AG04449 (cell line): ENCODE measurements at regions of chr6 and their contacts with region 1.

Region 1: DNA sequence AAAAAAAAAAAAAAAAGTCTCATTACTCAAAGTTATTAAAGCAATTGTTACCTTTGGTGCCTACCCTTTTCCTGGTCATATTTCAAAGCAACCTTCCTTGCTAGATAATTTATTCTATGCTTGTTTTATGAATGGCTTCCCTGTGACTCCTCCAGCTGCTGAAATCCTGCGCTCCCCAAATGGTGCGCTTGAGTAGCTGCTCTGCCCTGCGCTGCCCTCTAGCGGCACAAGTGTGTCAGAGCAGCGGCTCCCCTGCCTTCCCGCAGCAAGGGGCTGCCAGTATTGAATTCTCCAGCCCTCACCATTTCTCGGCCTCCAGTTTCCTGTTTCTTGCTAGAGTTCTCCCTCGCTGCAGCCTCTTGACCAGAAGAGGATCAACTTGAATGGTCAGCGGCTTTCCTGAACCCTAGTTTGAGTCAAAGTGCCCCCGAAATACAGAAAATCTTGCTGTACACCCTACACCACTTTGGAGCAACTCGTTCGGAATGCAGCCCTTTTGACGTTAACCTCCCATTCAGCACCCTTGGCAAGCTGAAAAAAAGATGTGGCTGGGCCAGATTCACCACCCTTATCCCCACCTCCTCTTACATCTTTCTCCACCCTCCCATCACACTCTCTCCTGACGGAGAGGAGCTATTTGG is 60.4 kb upstream of the KLHL31 start:
- DNase-seq: no peak
- H3K4me3 ChIP-seq: no peak overlapping the region
- CTCF ChIP-seq: peak; percentile 98

Region 2: DNA sequence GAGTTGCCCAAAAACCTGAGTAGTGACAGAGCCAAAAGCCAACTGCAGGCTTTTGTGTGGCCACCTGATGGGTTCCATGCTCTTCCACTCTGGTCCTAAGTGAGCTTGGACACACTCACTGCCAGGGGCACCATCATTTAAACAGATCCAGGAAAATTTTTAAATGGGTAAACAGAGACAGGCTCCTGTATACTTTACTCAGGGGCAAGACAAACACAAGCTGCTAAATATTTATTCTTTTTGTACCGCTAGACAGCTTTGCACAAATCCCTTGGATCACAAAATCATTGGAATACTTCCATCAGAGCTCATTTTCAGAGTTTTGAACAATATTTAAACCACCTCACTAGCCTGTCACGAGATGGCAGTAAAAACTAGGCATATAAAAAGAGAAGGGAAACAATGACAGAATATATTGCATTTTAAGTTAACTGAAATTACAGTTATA is 212.4 kb before region 1 on chr6:
- CTCF ChIA-PET with region 1: interaction called, 11 read pairs
- POLR2A ChIA-PET with region 1: no interaction called
- DNase-seq: no peak
- H3K4me3 ChIP-seq: no peak overlapping the region
- CTCF ChIP-seq: no peak

Region 3: GRCh38 chr6:53686355-53686940 is 39.5 kb before region 1 on chr6:
- CTCF ChIA-PET with region 1: interaction called, 14 read pairs
- POLR2A ChIA-PET with region 1: no interaction called
- DNase-seq: no peak
- H3K4me3 ChIP-seq: no peak overlapping the region
- CTCF ChIP-seq: no peak

Region 4: GRCh38 chr6:53741034-53741823 is 15.3 kb after region 1 on chr6:
- CTCF ChIA-PET with region 1: interaction called, 96 read pairs
- POLR2A ChIA-PET with region 1: no interaction called
- DNase-seq: no peak
- H3K4me3 ChIP-seq: no peak overlapping the region
- CTCF ChIP-seq: no peak

Region 5: GRCh38 chr6:53794720-53795253 is 68.9 kb after region 1 on chr6 and contains the start of gene LRRC1:
- CTCF ChIA-PET with region 1: interaction called, 21 read pairs
- POLR2A ChIA-PET with region 1: interaction called, 3 read pairs
- DNase-seq: no peak
- H3K4me3 ChIP-seq: peak within 1 kb of the TSS; percentile 86
- CTCF ChIP-seq: no peak

Region 6: GRCh38 chr6:53825532-53826321 is 99.8 kb after region 1 on chr6:
- CTCF ChIA-PET with region 1: no interaction called
- POLR2A ChIA-PET with region 1: no interaction called
- DNase-seq: no peak
- H3K4me3 ChIP-seq: no peak overlapping the region
- CTCF ChIP-seq: no peak

Region 7: GRCh38 chr6:54020334-54020733 is 294.4 kb after region 1 on chr6:
- CTCF ChIA-PET with region 1: no interaction called
- POLR2A ChIA-PET with region 1: no interaction called
- DNase-seq: no peak
- H3K4me3 ChIP-seq: no peak overlapping the region
- CTCF ChIP-seq: no peak